ENCODE measurements at regions of chr17 and their contacts with region 1.

Region 1: DNA sequence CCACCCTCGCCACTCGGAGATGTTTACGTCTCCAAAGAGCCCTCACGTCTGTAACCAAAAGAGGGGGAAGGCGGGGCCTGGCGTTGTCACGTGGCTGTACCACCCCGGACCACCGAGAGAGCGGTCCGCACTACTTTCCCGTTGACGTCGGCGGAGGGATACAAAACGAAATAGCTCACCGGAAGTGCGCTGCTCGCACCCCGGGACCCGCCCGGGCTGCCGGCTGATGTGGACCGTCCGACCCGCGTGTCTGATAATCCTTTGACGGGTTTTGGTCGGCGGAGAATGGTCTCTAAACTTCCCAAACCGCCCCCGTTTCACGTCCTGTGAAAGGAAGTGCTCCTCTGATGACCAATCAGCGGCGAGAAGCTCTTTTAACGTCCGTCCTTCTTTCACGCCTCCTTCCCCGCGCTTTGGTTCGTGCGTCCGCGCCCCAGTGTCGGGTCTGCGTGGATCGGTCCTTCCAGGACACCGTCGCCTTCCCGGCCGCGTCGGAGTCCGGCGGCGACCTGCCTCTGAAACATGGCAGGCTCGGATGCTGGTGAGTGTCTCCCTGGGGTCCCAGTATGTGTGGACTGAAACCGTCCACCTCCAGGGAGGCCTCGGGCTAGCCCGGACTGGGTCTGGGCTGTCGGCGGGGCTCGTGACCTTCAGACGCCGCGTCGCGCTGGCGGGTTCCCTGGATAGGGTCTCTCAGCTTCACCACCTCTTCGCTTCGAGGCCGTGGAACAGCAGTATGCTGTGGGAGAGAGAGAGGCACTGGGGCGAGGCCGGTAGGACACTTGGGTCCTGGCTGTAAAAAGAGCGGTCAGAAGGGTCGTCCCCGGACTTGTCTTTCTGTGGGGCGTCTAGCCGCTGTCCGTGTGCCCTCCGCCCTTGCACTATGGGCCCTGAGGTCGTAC is at the start of gene CEP95:
- DNase-seq: peak; percentile 97
- ATAC-seq: peak; percentile 56
- H3K4me3 Mint-ChIP-seq: peak within 1 kb of the TSS; percentile 100
- H3K27ac Mint-ChIP-seq: peak within 1 kb of the TSS; percentile 100
- H3K4me1 Mint-ChIP-seq: peaks cover 48% of the 10 kb centered on the region
- H3K27me3 Mint-ChIP-seq: no peaks in the 10 kb centered on the region
- total RNA-seq, gene CEP95: 40.5 to 42.8 TPM

Region 2: DNA sequence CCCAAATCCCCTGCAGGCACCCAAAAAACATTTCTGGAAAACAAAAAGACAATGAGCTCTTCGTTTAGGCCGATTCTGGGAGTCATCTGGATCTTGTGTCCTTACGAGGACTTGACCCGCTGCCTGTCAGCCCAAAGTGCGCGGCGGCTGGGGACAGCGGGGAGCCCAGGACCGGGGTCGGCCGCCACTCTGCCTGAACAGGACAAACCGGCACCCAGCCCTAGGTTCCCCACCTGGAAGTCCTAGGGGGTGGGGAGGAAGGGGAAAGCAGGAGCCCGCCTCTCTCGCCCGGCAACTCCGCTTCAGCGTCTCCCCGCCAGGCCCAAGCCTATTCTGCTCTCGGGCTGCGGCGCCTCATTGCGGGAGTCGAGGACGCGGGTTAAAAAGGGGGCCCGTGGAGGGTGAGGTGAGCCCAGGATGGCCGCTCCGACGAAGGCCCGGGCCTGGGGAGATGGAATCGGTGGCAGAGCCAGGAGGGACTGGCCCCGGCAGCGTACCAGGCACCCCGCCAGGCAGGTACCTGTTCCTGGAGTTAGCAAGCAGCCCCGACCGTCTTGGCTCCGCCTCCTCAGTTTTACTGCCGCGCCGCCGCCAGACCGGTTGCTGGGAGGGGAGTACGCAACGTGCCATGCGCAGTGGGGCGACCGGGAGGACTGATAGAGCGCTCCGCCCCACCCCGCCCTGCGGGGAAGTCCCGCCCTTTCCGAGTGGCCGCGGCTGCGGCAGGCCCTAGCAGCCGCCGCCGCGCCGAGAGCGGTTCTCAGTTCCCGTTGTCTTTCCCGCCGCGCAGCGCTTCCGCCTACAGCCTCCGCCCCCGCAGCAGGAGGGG is 765.4 kb before region 1 on chr17 and contains the start of gene STRADA:
- CTCF ChIA-PET with region 1: no interaction called
- POLR2A ChIA-PET with region 1: no interaction called
- intact Hi-C with region 1: loop called in 1 of 2 experiments (anchors 5 kb)
- DNase-seq: peak; percentile 100
- ATAC-seq: peak; percentile 94
- H3K4me3 Mint-ChIP-seq: peak within 1 kb of the TSS; percentile 91
- H3K27ac Mint-ChIP-seq: peak within 1 kb of the TSS; percentile 95
- H3K4me1 Mint-ChIP-seq: peaks cover 29% of the 10 kb centered on the region
- H3K27me3 Mint-ChIP-seq: no peaks in the 10 kb centered on the region
- total RNA-seq, gene STRADA: 51.0 to 53.6 TPM

Region 3: GRCh38 chr17:64145757-64146417 is 360.9 kb before region 1 on chr17:
- CTCF ChIA-PET with region 1: no interaction called
- POLR2A ChIA-PET with region 1: interaction called, 7 read pairs
- intact Hi-C with region 1: loop called in 1 of 2 experiments (anchors 1 kb)
- DNase-seq: peak; percentile 97
- ATAC-seq: peak; percentile 96
- H3K4me3 Mint-ChIP-seq: no peak overlapping the region
- H3K27ac Mint-ChIP-seq: no peak overlapping the region
- H3K4me1 Mint-ChIP-seq: peaks cover 24% of the 10 kb centered on the region
- H3K27me3 Mint-ChIP-seq: no peaks in the 10 kb centered on the region

Region 4: DNA sequence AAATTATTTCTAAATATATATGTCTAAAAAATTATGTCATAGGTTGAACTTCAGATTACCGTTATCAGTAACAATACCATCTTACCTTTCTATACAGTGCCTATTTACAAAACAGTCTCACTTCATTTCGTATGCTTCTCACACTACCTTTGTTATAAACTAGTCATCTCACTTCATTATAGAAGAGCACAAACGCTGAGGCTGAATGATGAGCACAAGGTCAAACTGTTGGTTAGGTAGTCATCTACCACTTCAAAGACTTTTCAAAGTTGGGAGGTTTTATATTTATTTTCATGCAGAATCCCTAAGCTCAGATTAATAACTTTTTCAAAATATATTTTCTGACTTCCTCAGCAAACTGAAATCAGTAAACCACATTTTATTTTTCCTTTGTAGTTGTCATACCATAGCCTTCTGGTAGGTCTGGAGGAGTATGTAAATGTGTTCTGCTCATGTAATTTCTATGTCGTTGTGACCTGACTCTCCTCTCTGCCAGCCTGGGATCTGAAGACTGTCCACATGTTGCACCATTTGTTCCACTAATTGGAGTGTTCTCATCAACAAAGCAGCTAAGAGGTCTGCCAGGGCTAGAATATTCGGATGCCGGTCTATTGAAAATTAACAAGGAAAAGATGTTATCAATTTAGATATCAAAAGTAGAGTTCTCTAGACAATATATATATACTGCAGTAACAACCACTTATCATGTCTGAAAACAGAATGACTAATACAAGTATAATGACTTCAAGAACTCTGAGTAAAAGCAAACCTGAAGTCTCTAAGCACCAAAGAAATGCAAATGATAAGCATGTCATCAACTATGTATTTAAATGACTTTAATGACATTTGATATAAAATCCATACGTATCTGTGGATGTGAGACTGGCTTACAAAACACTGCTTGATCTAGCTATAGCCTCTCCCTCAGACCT is 73.8 kb after region 1 on chr17:
- CTCF ChIA-PET with region 1: no interaction called
- POLR2A ChIA-PET with region 1: interaction called, 3 read pairs
- intact Hi-C with region 1: loop called in 1 of 2 experiments (anchors 1 kb)
- DNase-seq: peak; percentile 30
- ATAC-seq: peak; percentile 92
- H3K4me3 Mint-ChIP-seq: peak overlapping the region; percentile 15
- H3K27ac Mint-ChIP-seq: peak overlapping the region; percentile 85
- H3K4me1 Mint-ChIP-seq: peaks cover 26% of the 10 kb centered on the region
- H3K27me3 Mint-ChIP-seq: no peaks in the 10 kb centered on the region

Region 5: GRCh38 chr17:64661976-64662773 is 155.3 kb after region 1 on chr17 and contains the start of gene SMURF2:
- CTCF ChIA-PET with region 1: no interaction called
- POLR2A ChIA-PET with region 1: interaction called, 4 read pairs
- intact Hi-C with region 1: loop called in 1 of 2 experiments (anchors 1 kb)
- DNase-seq: peak; percentile 89
- ATAC-seq: peak; percentile 82
- H3K4me3 Mint-ChIP-seq: peak within 1 kb of the TSS; percentile 98
- H3K27ac Mint-ChIP-seq: peak within 1 kb of the TSS; percentile 92
- H3K4me1 Mint-ChIP-seq: peaks cover 27% of the 10 kb centered on the region
- H3K27me3 Mint-ChIP-seq: no peaks in the 10 kb centered on the region
- total RNA-seq, gene SMURF2: 13.9 to 15.0 TPM

Measured in activated CD4-positive, alpha-beta T cell treated with anti-CD3 and anti-CD28 coated beads for 36 hours (primary cell).